Panc1 (cell line): ENCODE measurements at regions of chr1 and their contacts with region 1.

Region 1: DNA sequence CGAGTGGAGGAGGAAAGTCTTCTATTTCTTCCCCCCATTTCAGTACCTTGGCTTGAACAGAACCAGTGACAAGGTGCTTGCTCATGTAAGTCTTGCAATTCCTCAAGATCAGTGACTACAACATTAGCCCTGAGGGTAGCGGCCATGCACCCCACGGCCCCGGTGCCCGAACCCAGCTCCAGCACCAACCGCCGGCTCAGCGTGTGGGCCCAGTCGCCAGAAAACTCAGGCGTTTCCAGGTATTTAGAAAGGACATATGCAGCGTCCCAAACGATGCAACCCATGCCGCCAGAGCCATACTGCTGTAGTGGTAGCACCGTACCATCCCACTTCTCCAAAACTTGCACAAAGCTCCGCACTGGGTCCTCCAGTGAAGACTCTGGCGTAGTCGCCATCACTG is 11.2 kb upstream of the MANEAL start:
- DNase-seq: no peak
- ATAC-seq: no peak
- H3K4me3 ChIP-seq: no peak overlapping the region
- H3K27ac ChIP-seq: no peak overlapping the region
- H3K4me1 ChIP-seq: no peaks in the 10 kb centered on the region
- H3K27me3 ChIP-seq: peaks cover 4% of the 10 kb centered on the region; the same call in 1 of the 2 replicates
- CTCF ChIP-seq: no peak

Region 2: GRCh38 chr1:37537378-37537777 is 245.1 kb before region 1 on chr1:
- CTCF ChIA-PET with region 1: no interaction called
- POLR2A ChIA-PET with region 1: no interaction called
- in situ Hi-C with region 1: no loop called
- intact Hi-C with region 1: no loop called
- DNase-seq: peak; percentile 76
- ATAC-seq: no peak
- H3K4me3 ChIP-seq: no peak overlapping the region
- H3K27ac ChIP-seq: no peak overlapping the region
- H3K4me1 ChIP-seq: peaks cover 5% of the 10 kb centered on the region
- H3K27me3 ChIP-seq: no peaks in the 10 kb centered on the region
- CTCF ChIP-seq: no peak

Region 3: GRCh38 chr1:37561133-37562132 is 221.1 kb before region 1 on chr1:
- CTCF ChIA-PET with region 1: no interaction called
- POLR2A ChIA-PET with region 1: no interaction called
- in situ Hi-C with region 1: no loop called
- intact Hi-C with region 1: no loop called
- DNase-seq: no peak
- ATAC-seq: peak; percentile 85
- H3K4me3 ChIP-seq: no peak overlapping the region
- H3K27ac ChIP-seq: no peak overlapping the region
- H3K4me1 ChIP-seq: no peaks in the 10 kb centered on the region
- H3K27me3 ChIP-seq: no peaks in the 10 kb centered on the region
- CTCF ChIP-seq: peak; percentile 89

Region 4: GRCh38 chr1:38958967-38959366 is 1176.5 kb after region 1 on chr1:
- CTCF ChIA-PET with region 1: no interaction called
- POLR2A ChIA-PET with region 1: interaction called, 10 read pairs
- in situ Hi-C with region 1: no loop called
- intact Hi-C with region 1: no loop called
- DNase-seq: no peak
- ATAC-seq: no peak
- H3K4me3 ChIP-seq: no peak overlapping the region
- H3K27ac ChIP-seq: no peak overlapping the region
- H3K4me1 ChIP-seq: no peaks in the 10 kb centered on the region
- H3K27me3 ChIP-seq: no peaks in the 10 kb centered on the region
- CTCF ChIP-seq: no peak